GM10248 (cell line): ENCODE measurements at regions of chr3 and their contacts with region 1.

Region 1: DNA sequence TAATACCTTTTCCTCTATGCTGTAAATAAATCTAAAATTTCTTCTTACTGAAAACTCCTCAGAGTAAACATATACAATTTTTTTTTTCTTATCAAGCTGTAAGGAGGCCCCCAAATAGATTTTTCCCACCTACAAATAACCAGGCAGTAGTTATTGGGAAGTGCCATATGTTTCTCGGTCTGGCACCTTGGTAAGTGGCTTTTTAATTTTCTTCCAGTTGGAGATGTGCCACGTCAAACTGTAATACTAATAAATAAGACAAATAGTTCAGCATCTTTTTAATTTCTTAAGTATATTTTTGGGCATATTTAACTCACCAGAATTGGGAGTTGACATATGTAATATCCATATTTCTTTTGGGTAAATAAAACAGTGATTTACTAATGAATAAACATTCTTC is 346.3 kb downstream of the DIPK2A start:
- DNase-seq: no peak
- CTCF ChIP-seq: no peak

Region 2: DNA sequence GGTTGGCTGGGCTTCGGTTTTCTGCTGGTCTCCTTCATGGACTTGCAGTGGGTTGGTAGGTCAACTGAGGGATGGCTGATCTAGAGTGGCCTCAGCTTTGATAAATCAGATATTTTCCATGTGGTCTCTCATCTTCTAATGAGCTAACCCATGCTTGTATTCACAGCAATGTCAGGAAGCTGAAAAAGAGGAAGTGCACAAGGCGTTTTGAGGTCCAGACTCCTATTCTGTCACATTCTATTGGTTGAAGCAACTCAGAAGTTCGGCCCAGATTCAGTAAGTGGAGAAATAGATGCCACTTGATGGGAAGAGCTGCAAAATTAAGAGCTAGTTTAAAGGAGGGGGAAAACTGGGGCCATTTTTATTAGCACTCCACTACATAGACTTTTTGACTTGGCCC is 14.9 kb after region 1 on chr3:
- CTCF ChIA-PET with region 1: interaction called, 13 read pairs
- POLR2A ChIA-PET with region 1: no interaction called
- DNase-seq: no peak
- CTCF ChIP-seq: no peak